CD4-positive, alpha-beta memory T cell (primary cell): ENCODE measurements at regions of chr2 and their contacts with region 1.

Region 1: GRCh38 chr2:121530212-121530705 is 421 bp upstream of the RNU4ATAC start:
- DNase-seq: peak in 2 of 5 donors; percentile 86 to 88
- H3K4me3 ChIP-seq: peak overlapping the region; percentile 68 to 96
- H3K4me3 Mint-ChIP-seq: peak overlapping the region; percentile 89 to 98 (median 96)
- H3K27ac ChIP-seq: peak overlapping the region; percentile 100
- H3K27ac Mint-ChIP-seq: peak overlapping the region; percentile 96 to 99 (median 99)
- H3K4me1 ChIP-seq: peaks cover 24% of the 10 kb centered on the region
- H3K4me1 Mint-ChIP-seq: peaks cover 23 to 49% (median 29%) of the 10 kb centered on the region in 4 donors
- H3K27me3 ChIP-seq: no peaks in the 10 kb centered on the region
- H3K27me3 Mint-ChIP-seq: no peaks in the 10 kb centered on the region

Region 2: GRCh38 chr2:121649596-121650314 is 119.5 kb after region 1 on chr2:
- CTCF ChIA-PET with region 1: interaction called, 32 read pairs
- POLR2A ChIA-PET with region 1: interaction called, 152 read pairs
- intact Hi-C with region 1: loop called (anchors 1 kb)
- DNase-seq: peak; percentile 96 to 99 (median 98)
- H3K4me3 ChIP-seq: peak overlapping the region; percentile 88 to 97
- H3K4me3 Mint-ChIP-seq: peak overlapping the region; percentile 96 to 100 (median 99)
- H3K27ac ChIP-seq: peak overlapping the region; percentile 94
- H3K27ac Mint-ChIP-seq: peak overlapping the region; percentile 99 to 100 (median 99)
- H3K4me1 ChIP-seq: peaks cover 56% of the 10 kb centered on the region
- H3K4me1 Mint-ChIP-seq: peaks cover 50 to 93% (median 65%) of the 10 kb centered on the region in 4 donors
- H3K27me3 ChIP-seq: no peaks in the 10 kb centered on the region
- H3K27me3 Mint-ChIP-seq: peaks cover 0 to 3% of the 10 kb centered on the region in 2 donors

Region 3: GRCh38 chr2:121722479-121722878 is 192.2 kb after region 1 on chr2:
- CTCF ChIA-PET with region 1: interaction called, 49 read pairs
- POLR2A ChIA-PET with region 1: interaction called, 19 read pairs
- intact Hi-C with region 1: no loop called
- DNase-seq: no peak
- H3K4me3 ChIP-seq: no peak overlapping the region
- H3K4me3 Mint-ChIP-seq: no peak overlapping the region
- H3K27ac ChIP-seq: no peak overlapping the region
- H3K27ac Mint-ChIP-seq: peak overlapping the region in 1 of 7 donors; percentile 11
- H3K4me1 ChIP-seq: no peaks in the 10 kb centered on the region
- H3K4me1 Mint-ChIP-seq: peaks cover 4 to 17% (median 6%) of the 10 kb centered on the region in 4 donors
- H3K27me3 ChIP-seq: no peaks in the 10 kb centered on the region
- H3K27me3 Mint-ChIP-seq: no peaks in the 10 kb centered on the region

Region 4: GRCh38 chr2:121755236-121756111 is 225.2 kb after region 1 on chr2 and contains the start of gene TSN:
- CTCF ChIA-PET with region 1: interaction called, 3 read pairs
- POLR2A ChIA-PET with region 1: interaction called, 15 read pairs
- intact Hi-C with region 1: loop called (anchors 1 kb)
- DNase-seq: peak; percentile 96 to 98 (median 97)
- H3K4me3 ChIP-seq: peak within 1 kb of the TSS; percentile 97 to 98
- H3K4me3 Mint-ChIP-seq: peak within 1 kb of the TSS; percentile 85 to 99 (median 93)
- H3K27ac ChIP-seq: peak within 1 kb of the TSS; percentile 75
- H3K27ac Mint-ChIP-seq: peak within 1 kb of the TSS; percentile 79 to 99 (median 96)
- H3K4me1 ChIP-seq: peaks cover 24% of the 10 kb centered on the region
- H3K4me1 Mint-ChIP-seq: peaks cover 18 to 42% (median 26%) of the 10 kb centered on the region in 4 donors
- H3K27me3 ChIP-seq: no peaks in the 10 kb centered on the region
- H3K27me3 Mint-ChIP-seq: no peaks in the 10 kb centered on the region
- total RNA-seq, gene TSN: 52.4 to 54.0 TPM

Region 5: DNA sequence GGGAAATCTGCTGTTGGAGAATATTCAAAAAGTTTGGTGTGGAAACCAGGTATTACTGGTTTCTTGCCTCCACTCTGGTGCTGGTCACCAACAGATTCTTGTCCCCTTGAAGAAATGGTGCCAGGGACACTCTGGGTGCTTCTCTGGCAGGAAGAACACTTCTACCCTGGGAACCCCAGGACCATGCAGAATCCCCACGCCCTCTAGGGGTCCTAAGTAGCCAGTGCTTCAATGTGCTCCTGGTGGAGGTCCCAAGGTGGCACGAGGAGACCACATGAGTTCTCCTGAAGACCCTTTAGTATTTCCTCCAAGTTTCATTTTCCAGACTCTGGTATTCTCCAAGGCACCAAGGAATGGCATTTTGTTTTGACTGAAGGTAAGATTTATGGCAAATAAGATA is 605.8 kb after region 1 on chr2:
- CTCF ChIA-PET with region 1: no interaction called
- POLR2A ChIA-PET with region 1: no interaction called
- intact Hi-C with region 1: loop called (anchors 5 kb)
- DNase-seq: no peak
- H3K4me3 ChIP-seq: no peak overlapping the region
- H3K4me3 Mint-ChIP-seq: no peak overlapping the region
- H3K27ac ChIP-seq: no peak overlapping the region
- H3K27ac Mint-ChIP-seq: no peak overlapping the region
- H3K4me1 ChIP-seq: no peaks in the 10 kb centered on the region
- H3K4me1 Mint-ChIP-seq: peaks cover 0 to 6% (median 0%) of the 10 kb centered on the region in 4 donors
- H3K27me3 ChIP-seq: no peaks in the 10 kb centered on the region
- H3K27me3 Mint-ChIP-seq: peaks cover 0 to 5% of the 10 kb centered on the region in 2 donors